HEK293 (cell line): ENCODE measurements at regions of chrX and their contacts with region 1.

Region 1: GRCh38 chrX:136130931-136131833 is 16.2 kb upstream of the FHL1 start:
- H3K4me3 ChIP-seq: no peak overlapping the region
- H3K27ac ChIP-seq: peak overlapping the region; percentile 76
- H3K4me1 ChIP-seq: peaks cover 9% of the 10 kb centered on the region
- CTCF ChIP-seq: no peak

Region 2: GRCh38 chrX:135688137-135688536 is 443.0 kb before region 1 on chrX:
- CTCF ChIA-PET with region 1: no interaction called
- POLR2A ChIA-PET with region 1: no interaction called
- H3K4me3 ChIP-seq: no peak overlapping the region
- H3K27ac ChIP-seq: no peak overlapping the region
- H3K4me1 ChIP-seq: no peaks in the 10 kb centered on the region
- CTCF ChIP-seq: no peak

Region 3: DNA sequence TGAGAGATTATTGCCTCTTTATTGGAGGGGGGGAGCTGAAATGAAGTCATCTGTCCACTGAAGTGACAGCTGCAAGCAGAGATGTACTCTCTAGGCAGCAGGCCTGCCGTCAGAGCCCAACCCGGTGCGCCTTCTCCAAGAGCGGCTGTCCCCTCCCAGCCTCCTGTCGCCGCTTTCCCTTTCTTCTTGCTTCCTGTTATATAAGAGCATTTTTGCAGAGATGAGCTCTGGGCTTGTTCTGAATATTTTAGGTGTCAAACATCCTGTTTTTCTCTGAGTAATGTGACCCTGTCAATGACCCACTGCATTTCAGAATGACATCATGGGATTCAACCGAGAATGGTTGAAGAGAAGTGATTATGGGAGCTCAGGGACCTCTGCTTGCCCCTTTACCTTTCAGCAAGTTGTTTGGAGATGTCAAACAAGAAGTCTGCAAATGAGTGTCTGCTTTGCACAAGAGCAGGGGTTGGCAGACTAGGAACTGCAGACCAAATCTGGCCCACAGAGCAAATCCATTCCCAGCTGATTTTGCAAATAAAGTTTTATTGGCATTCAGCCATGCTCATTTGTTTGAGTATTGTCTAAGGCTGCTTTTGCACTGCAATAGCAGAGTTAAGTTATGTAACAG is 66.0 kb before region 1 on chrX:
- CTCF ChIA-PET with region 1: no interaction called
- POLR2A ChIA-PET with region 1: interaction called, 14 read pairs
- H3K4me3 ChIP-seq: no peak overlapping the region
- H3K27ac ChIP-seq: peak overlapping the region; percentile 79
- H3K4me1 ChIP-seq: peaks cover 14% of the 10 kb centered on the region
- CTCF ChIP-seq: no peak